Aorta (tissue), 5 donors: ENCODE measurements at regions of chr6 and their contacts with region 1.

Region 1: DNA sequence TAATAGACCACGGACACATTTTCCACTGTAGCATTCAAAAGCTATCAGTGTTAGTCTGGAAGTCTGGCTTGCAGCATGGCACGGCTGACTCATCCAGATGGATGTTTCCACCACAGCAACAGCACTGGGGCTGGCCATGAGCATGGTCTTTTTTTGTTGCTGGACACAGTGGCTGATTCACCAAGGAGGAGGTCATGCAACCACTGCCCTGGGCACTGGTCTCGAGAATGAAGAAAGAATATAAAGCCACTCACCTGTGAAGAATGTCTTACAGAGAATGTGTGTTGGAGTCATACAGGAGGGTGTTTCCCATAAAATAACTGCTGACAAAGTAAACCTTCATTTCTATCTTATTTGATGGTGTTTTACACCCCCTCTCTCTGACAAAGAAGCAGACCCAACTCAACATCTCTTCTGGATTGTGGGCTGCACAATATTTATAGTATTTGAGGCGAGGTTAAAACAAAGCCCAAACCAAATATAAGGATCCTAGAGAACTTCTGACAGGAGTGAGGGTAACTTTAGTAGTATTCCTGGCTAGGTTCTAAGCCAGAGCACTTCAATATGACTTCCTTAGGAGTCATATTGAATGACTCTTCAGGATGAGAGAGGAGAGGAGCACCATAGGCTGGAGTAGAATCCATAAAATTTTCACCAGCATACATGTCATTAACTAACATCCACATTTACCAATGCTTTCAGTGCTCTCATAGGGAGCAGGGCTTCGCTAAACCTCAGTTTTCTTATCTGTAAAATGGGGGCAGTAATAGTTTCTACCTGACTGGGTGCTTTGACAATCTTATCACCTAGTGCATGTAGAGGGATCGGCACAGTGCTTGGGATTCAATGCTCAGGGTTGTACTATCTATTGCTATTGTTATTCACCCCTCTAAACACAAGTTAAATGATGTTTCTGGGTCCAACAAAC is 121.4 kb downstream of the KIF13A start:
- DNase-seq: peak; percentile 91 to 93
- ATAC-seq: peak; percentile 89
- H3K4me3 ChIP-seq: no peak overlapping the region
- H3K27ac ChIP-seq: peak overlapping the region; percentile 86 to 97
- H3K4me1 ChIP-seq: peaks cover 6 to 19% of the 10 kb centered on the region in 2 donors
- H3K27me3 ChIP-seq: no peaks in the 10 kb centered on the region

Region 2: DNA sequence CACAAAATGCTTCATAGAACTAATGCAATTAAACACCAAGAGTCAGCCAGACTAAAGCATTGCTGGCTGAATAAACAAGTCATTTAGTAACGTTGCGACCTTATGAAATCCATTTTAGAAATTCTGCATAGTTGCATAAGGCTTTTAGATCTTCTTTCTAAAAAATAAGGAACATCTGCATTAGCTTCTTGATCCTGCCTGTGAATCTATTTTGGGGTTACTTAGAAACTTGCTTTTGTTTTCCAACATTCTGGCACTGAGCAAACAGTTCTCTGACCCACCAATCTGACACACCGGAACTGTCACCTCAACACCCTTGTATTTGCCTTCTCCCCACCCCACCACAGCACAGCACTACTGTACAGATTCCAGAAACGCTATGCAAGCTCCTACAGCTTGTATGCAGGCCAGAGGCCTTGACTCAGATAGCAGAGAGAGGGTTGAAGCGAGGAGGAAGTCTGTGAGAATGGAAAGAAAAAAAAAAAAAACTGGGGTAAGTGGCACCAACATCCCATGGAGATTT is 66.3 kb after region 1 on chr6:
- intact Hi-C with region 1: loop called in 1 of 2 experiments (anchors 10 kb)
- DNase-seq: peak in 1 of 2 donors; percentile 59
- ATAC-seq: peak; percentile 77
- H3K4me3 ChIP-seq: no peak overlapping the region
- H3K27ac ChIP-seq: peak overlapping the region; percentile 64 to 84
- H3K4me1 ChIP-seq: peaks cover 9 to 22% of the 10 kb centered on the region in 2 donors
- H3K27me3 ChIP-seq: no peaks in the 10 kb centered on the region

Region 3: GRCh38 chr6:17962436-17963031 is 96.5 kb after region 1 on chr6:
- intact Hi-C with region 1: loop called in 1 of 2 experiments (anchors 5 kb)
- DNase-seq: peak in 1 of 2 donors; percentile 73
- ATAC-seq: peak; percentile 72
- H3K4me3 ChIP-seq: no peak overlapping the region
- H3K27ac ChIP-seq: peak overlapping the region; percentile 90
- H3K4me1 ChIP-seq: peaks cover 1 to 6% of the 10 kb centered on the region in 2 donors
- H3K27me3 ChIP-seq: no peaks in the 10 kb centered on the region

Region 4: DNA sequence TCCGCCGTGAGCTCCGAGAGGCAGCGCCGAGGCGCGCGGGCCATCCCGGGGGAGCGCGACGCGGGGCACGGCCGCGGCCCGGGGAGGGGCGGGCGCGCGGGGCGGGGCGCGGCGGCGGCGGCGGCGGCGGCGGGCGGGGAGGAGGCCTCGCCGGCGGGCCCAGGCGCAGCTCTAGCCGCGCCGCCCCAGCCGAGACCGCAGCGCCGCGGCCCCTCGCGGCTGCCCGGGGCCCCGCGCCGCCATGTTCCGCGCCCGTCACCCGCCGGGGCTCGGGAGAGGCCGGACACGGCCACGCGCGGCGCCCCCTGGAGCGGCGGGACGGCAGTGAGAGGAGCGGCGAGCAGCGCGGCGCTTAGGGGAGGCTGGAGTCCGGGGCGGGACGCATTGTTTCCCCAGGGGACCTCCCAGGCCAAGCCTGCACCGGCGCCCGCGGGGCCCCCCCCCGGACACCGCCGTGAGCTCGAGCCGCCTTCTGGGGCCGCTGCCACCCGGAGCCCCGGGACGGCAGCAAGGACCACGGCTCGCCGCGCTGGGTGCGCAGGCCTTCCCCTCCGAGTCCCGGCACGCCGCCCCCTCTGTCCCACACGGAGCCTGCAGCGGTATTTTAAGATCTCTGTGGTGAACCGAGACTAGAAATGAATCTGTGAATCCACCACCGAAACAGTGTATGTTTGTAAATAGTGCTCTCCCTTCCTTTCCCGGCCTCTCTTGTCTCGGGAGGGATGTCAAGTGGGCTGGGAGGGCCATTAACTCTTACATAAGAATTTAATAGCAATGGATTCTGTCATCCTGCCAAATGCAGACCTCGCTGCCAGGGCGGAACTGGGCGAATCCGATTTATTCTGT is 121.7 kb after region 1 on chr6 and contains the start of gene KIF13A:
- intact Hi-C with region 1: loop called in 1 of 2 experiments (anchors 5 kb)
- DNase-seq: peak; percentile 80 to 90
- ATAC-seq: peak; percentile 83
- H3K4me3 ChIP-seq: peak within 1 kb of the TSS; percentile 72 to 86
- H3K27ac ChIP-seq: peak within 1 kb of the TSS; percentile 82 to 98
- H3K4me1 ChIP-seq: no peaks in the 10 kb centered on the region
- H3K27me3 ChIP-seq: no peaks in the 10 kb centered on the region
- total RNA-seq, gene KIF13A: 89.2 to 109 TPM

Region 5: GRCh38 chr6:18047406-18047805 is 181.3 kb after region 1 on chr6:
- intact Hi-C with region 1: loop called in 1 of 2 experiments (anchors 10 kb)
- DNase-seq: no peak
- ATAC-seq: no peak
- H3K4me3 ChIP-seq: no peak overlapping the region
- H3K27ac ChIP-seq: peak overlapping the region; percentile 26 to 48
- H3K4me1 ChIP-seq: peaks cover 4 to 10% of the 10 kb centered on the region in 2 donors
- H3K27me3 ChIP-seq: no peaks in the 10 kb centered on the region